BJ (cell line): ENCODE measurements at regions of chr17 and their contacts with region 1.

Region 1: DNA sequence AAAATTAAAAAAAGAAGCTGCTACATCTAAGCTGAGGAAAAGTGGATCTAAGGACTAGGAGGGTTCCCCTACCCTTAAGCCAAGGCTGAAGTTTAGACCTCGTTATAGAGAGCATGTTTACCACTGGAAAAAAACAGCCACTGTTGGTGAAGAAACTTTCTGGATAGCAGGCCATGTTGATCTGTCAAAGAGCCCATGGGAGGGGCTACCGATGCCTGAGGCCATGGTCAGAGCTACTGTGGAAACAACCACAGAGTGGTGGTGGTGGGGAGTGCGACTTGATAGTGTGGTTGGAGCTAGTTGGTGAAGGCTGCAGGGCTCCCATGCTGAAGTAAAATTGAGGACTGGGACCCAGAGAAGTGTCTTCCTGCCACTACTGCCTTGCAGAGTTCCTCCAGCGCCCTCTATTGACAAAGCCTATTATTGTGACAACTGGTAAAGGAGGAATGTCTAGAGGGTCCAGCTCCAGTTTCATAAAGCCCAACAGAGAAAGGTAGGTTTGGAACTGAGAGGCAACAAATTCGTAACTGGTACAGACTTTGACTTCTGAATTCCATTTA is 12.7 kb upstream of the FAM20A start:
- DNase-seq: no peak
- H3K4me3 ChIP-seq: no peak overlapping the region
- H3K27me3 ChIP-seq: no peaks in the 10 kb centered on the region
- CTCF ChIP-seq: peak; percentile 81

Region 2: DNA sequence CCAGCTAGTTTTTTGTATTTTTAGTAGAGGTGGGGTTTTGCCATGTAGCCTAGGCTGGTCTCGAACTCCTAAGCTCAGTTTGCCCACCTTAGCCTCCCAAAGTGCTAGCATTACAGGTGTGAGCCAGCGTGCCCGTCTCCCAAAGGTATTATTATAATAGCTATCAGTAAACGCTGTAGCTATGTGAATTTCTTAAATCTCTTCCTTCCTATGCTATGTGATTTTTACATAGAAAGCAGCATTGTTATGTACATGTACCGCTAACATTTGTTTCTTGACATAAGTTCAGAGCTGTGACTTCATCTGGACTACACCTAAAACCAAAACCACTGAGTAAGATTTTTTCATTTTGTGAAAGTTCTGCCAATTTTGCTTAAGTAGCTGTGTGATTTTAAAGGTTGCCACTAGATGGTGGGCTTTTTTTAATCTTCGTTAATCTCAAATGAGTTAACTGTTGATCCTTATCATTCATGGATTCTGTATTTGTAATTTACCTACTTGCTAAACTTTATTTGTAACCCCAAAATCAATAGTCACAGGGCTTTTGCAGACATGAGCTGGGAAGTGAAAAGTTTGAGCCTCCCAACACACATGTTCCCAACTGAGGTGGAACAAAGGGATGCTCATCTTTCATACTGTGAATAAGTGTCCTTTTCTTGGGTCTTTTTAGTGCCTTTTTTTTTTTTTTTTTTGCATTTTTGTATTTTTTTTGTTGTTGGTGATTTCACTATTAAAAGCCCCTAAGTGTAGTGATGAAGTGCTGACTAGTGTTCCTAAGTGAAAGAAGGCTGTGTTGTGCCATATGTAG is 79.7 kb before region 1 on chr17:
- CTCF ChIA-PET with region 1: interaction called, 33 read pairs
- POLR2A ChIA-PET with region 1: no interaction called
- DNase-seq: peak; percentile 21
- H3K4me3 ChIP-seq: no peak overlapping the region
- H3K27me3 ChIP-seq: no peaks in the 10 kb centered on the region
- CTCF ChIP-seq: peak; percentile 51

Region 3: DNA sequence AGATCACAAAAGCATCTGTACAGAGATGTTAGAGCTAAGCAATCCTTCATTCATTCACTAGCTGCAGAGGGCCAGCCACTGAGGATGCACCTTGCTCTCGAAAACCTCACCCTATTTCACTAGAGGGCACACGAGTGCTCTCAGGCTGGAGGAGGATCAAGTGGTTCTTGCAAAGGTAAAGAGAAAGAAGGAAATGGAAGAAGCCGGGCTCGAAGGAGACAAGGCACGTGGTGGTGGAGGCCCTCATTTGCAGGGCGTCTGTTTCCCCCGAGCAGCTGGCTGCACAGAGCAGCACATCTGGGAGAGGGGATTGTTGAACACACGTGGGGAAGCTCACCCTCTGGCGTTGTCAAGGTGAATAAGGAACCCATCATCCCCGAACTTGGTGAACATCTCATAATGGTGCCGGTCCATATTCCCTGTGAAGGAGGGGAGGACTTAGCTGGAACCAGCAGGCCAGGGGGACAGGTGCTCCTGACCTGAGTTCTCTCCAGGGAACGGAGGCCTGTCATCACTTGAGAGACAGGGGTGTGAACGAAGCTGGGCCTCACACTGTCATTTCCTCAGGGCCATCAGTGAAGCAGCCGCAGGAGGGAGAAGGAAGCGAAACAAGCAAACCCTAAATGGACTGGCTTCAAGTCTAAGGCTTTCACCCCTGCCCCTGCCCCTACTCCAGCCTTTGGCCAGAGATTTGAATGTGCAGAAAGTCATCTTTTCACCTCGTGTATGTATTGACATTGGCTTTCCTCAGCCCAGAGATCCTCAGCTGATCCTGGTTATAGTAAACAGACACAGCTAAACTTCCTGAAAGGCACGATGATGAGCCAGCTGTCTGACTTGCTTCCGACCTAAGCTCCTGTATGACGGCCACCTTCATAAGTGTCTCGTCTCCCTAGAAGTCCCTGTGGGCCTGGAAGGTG is 74.0 kb before region 1 on chr17:
- CTCF ChIA-PET with region 1: interaction called, 33 read pairs
- POLR2A ChIA-PET with region 1: no interaction called
- DNase-seq: no peak
- H3K4me3 ChIP-seq: no peak overlapping the region
- H3K27me3 ChIP-seq: no peaks in the 10 kb centered on the region
- CTCF ChIP-seq: peak; percentile 56

Region 4: GRCh38 chr17:68600067-68600930 is 13.5 kb before region 1 on chr17:
- CTCF ChIA-PET with region 1: interaction called, 18 read pairs
- POLR2A ChIA-PET with region 1: no interaction called
- DNase-seq: no peak
- H3K4me3 ChIP-seq: peak overlapping the region; percentile 58
- H3K27me3 ChIP-seq: no peaks in the 10 kb centered on the region
- CTCF ChIP-seq: peak; percentile 40

Region 5: GRCh38 chr17:68627956-68628575 is 14.2 kb after region 1 on chr17:
- CTCF ChIA-PET with region 1: interaction called, 13 read pairs
- POLR2A ChIA-PET with region 1: no interaction called
- DNase-seq: no peak
- H3K4me3 ChIP-seq: no peak overlapping the region
- H3K27me3 ChIP-seq: no peaks in the 10 kb centered on the region
- CTCF ChIP-seq: no peak

Region 6: GRCh38 chr17:68759343-68760132 is 145.7 kb after region 1 on chr17:
- CTCF ChIA-PET with region 1: interaction called, 11 read pairs
- POLR2A ChIA-PET with region 1: no interaction called
- DNase-seq: peak; percentile 56
- H3K4me3 ChIP-seq: peak overlapping the region; percentile 34
- H3K27me3 ChIP-seq: no peaks in the 10 kb centered on the region
- CTCF ChIP-seq: peak; percentile 95